PC-3 (cell line): ENCODE measurements at regions of chr1 and their contacts with region 1.

Region 1: GRCh38 chr1:2133039-2133878 is 61.3 kb downstream of the FAAP20 start:
- DNase-seq: peak; percentile 99
- ATAC-seq: peak; percentile 88
- H3K4me3 ChIP-seq: peak overlapping the region; percentile 69
- H3K27ac ChIP-seq: peak overlapping the region; percentile 89
- H3K4me1 ChIP-seq: peaks cover 16% of the 10 kb centered on the region
- H3K27me3 ChIP-seq: no peaks in the 10 kb centered on the region
- CTCF ChIP-seq: no peak

Region 2: GRCh38 chr1:1919304-1920056 is 213.8 kb before region 1 on chr1:
- CTCF ChIA-PET with region 1: no interaction called
- POLR2A ChIA-PET with region 1: no interaction called
- intact Hi-C with region 1: loop called (anchors 1 kb)
- DNase-seq: peak; percentile 100
- ATAC-seq: peak; percentile 87
- H3K4me3 ChIP-seq: peak overlapping the region; percentile 73
- H3K27ac ChIP-seq: no peak overlapping the region
- H3K4me1 ChIP-seq: peaks cover 15% of the 10 kb centered on the region
- H3K27me3 ChIP-seq: no peaks in the 10 kb centered on the region
- CTCF ChIP-seq: no peak

Region 3: GRCh38 chr1:2049718-2050427 is 83.4 kb before region 1 on chr1 and contains the start of gene PRKCZ:
- CTCF ChIA-PET with region 1: interaction called, 5 read pairs
- POLR2A ChIA-PET with region 1: no interaction called
- intact Hi-C with region 1: loop called (anchors 1 kb)
- DNase-seq: peak; percentile 99
- ATAC-seq: peak; percentile 81
- H3K4me3 ChIP-seq: peak within 1 kb of the TSS; percentile 98
- H3K27ac ChIP-seq: peak within 1 kb of the TSS; percentile 27; the same call in 1 of the 2 replicates
- H3K4me1 ChIP-seq: peaks cover 20% of the 10 kb centered on the region
- H3K27me3 ChIP-seq: no peaks in the 10 kb centered on the region
- CTCF ChIP-seq: no peak; the same call in 1 of the 2 replicates
- total RNA-seq, gene PRKCZ: 56.8 and 70.8 TPM in 2 replicates

Region 4: GRCh38 chr1:2085080-2085479 is 48.2 kb before region 1 on chr1:
- CTCF ChIA-PET with region 1: no interaction called
- POLR2A ChIA-PET with region 1: no interaction called
- intact Hi-C with region 1: no loop called
- DNase-seq: no peak
- ATAC-seq: no peak
- H3K4me3 ChIP-seq: no peak overlapping the region
- H3K27ac ChIP-seq: no peak overlapping the region
- H3K4me1 ChIP-seq: no peaks in the 10 kb centered on the region
- H3K27me3 ChIP-seq: no peaks in the 10 kb centered on the region
- CTCF ChIP-seq: no peak

Region 5: DNA sequence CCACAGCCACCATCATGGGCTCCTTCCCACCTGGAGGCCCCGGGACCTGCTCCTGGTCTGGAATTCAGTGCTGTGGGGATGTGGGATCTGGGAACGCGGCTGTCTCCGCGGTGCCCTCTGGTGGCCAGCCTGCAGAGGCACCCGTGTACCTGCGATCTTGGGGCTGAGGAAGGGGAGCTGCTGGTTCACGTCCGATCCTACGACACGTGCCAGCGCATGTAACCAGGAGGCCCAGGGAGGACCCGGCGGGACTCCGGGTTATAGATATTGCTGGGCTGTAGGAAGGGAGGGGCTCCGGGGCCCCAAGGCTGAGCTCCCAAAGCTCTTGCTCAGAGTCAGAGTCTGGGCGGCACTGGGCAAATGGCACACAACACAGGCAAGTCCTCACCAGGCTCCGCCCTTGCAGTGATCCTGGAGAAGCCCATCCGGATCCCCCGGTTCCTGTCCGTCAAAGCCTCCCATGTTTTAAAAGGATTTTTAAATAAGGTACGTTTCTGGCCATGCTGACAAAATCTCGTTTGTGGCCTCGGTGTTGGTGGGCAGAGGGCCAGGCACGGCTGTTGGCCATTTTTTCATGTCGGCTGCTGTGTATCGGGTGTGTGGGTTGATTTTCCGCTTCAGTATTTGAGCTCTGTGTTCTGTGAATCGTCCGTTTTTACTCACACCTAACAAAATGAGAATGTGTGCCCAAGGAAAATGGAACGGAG is 41.2 kb after region 1 on chr1:
- CTCF ChIA-PET with region 1: interaction called, 27 read pairs
- POLR2A ChIA-PET with region 1: no interaction called
- intact Hi-C with region 1: no loop called
- DNase-seq: peak; percentile 78
- ATAC-seq: peak; percentile 91
- H3K4me3 ChIP-seq: no peak overlapping the region; the same call in 1 of the 2 replicates
- H3K27ac ChIP-seq: no peak overlapping the region
- H3K4me1 ChIP-seq: no peaks in the 10 kb centered on the region
- H3K27me3 ChIP-seq: no peaks in the 10 kb centered on the region
- CTCF ChIP-seq: peak; percentile 99